HCT116 (cell line): ENCODE measurements at regions of chr5 and their contacts with region 1.

Region 1: GRCh38 chr5:146173597-146173996 is 8.9 kb downstream of the LARS1 start:
- DNase-seq: no peak
- ATAC-seq: no peak
- H3K4me3 ChIP-seq: no peak overlapping the region
- H3K27ac ChIP-seq: no peak overlapping the region
- H3K4me1 ChIP-seq: no peaks in the 10 kb centered on the region
- H3K27me3 ChIP-seq: no peaks in the 10 kb centered on the region
- CTCF ChIP-seq: no peak
- POLR2A ChIP-seq: no peak
- RAD21 ChIP-seq: no peak

Region 2: GRCh38 chr5:146130440-146131045 is 43.1 kb before region 1 on chr5:
- CTCF ChIA-PET with region 1: no interaction called
- POLR2A ChIA-PET with region 1: no interaction called
- RAD21 ChIA-PET with region 1: no interaction called
- intact Hi-C with region 1: loop called (anchors 5 kb)
- DNase-seq: no peak
- ATAC-seq: no peak
- H3K4me3 ChIP-seq: no peak overlapping the region
- H3K27ac ChIP-seq: no peak overlapping the region
- H3K4me1 ChIP-seq: no peaks in the 10 kb centered on the region
- H3K27me3 ChIP-seq: no peaks in the 10 kb centered on the region
- CTCF ChIP-seq: peak; percentile 30 to 74 (median 48); a peak in 4 of 6 replicates
- POLR2A ChIP-seq: no peak
- RAD21 ChIP-seq: peak; percentile 58

Region 3: DNA sequence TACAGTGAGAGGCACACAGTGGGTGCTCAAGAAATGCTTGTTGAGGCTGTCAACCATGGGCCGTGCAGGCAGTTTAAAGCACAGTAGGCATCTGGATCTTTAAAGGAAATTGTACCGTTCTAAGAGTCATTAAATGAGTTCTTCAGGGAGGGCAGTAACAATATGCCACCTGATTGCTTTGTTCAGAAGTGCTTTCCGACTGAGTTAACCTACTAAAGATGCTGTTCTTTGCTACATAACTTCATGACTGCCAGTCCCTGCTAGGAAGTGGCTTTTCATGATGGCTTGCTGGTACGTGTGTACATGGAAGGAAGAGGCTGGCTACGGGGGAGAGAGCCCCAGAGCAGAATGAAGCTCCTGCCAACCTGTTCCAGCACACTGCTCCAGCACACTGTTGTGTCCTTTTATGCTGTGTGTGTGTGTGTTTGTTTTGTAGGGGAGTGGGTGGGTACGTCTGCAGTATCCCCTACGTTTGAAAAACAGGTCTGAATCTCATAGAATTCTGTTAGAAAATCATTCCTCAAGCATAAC is 746.8 kb after region 1 on chr5:
- CTCF ChIA-PET with region 1: no interaction called
- POLR2A ChIA-PET with region 1: no interaction called
- RAD21 ChIA-PET with region 1: no interaction called
- intact Hi-C with region 1: no loop called
- DNase-seq: no peak
- ATAC-seq: no peak
- H3K4me3 ChIP-seq: no peak overlapping the region
- H3K27ac ChIP-seq: no peak overlapping the region
- H3K4me1 ChIP-seq: no peaks in the 10 kb centered on the region
- H3K27me3 ChIP-seq: peaks cover 10% of the 10 kb centered on the region; the same call in 1 of the 2 replicates
- CTCF ChIP-seq: no peak
- POLR2A ChIP-seq: no peak
- RAD21 ChIP-seq: no peak